ENCODE measurements at regions of chr7 and their contacts with region 1.

Region 1: GRCh38 chr7:149662591-149663095 is 110.7 kb downstream of the ZNF467 start:
- DNase-seq: peak; percentile 66
- H3K4me3 ChIP-seq: no peak overlapping the region
- H3K27ac ChIP-seq: no peak overlapping the region
- H3K4me1 ChIP-seq: no peaks in the 10 kb centered on the region
- H3K27me3 ChIP-seq: peaks cover 0 to 16% of the 10 kb centered on the region in 2 experiments
- CTCF ChIP-seq: peak; percentile 55 to 66
- POLR2A ChIP-seq: no peak

Region 2: DNA sequence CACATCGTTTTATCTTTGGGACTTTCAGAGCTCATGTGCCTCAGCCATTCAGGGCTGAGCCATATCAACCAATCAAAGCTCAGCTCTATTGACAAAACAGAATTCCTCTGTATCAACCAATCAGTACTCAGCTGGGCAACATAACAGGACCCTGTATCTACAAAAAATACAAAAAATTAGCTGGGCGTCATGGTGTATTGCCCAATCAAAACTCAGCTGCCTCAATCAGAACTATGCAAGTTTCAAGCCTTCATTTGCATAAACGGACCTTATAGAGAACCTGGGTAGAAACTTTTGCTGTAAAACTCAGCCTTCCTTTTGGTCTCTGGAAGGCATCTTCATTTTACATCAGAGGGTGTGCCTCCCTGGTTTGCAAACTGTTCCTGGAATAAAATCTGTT is 33.6 kb after region 1 on chr7:
- CTCF ChIA-PET with region 1: interaction called, 10 read pairs
- POLR2A ChIA-PET with region 1: no interaction called
- dilution Hi-C with region 1: no loop called
- intact Hi-C with region 1: no loop called
- DNase-seq: no peak
- H3K4me3 ChIP-seq: no peak overlapping the region
- H3K27ac ChIP-seq: no peak overlapping the region
- H3K4me1 ChIP-seq: no peaks in the 10 kb centered on the region
- H3K27me3 ChIP-seq: peaks cover 5 to 23% of the 10 kb centered on the region in 2 experiments
- CTCF ChIP-seq: no peak
- POLR2A ChIP-seq: no peak

Region 3: DNA sequence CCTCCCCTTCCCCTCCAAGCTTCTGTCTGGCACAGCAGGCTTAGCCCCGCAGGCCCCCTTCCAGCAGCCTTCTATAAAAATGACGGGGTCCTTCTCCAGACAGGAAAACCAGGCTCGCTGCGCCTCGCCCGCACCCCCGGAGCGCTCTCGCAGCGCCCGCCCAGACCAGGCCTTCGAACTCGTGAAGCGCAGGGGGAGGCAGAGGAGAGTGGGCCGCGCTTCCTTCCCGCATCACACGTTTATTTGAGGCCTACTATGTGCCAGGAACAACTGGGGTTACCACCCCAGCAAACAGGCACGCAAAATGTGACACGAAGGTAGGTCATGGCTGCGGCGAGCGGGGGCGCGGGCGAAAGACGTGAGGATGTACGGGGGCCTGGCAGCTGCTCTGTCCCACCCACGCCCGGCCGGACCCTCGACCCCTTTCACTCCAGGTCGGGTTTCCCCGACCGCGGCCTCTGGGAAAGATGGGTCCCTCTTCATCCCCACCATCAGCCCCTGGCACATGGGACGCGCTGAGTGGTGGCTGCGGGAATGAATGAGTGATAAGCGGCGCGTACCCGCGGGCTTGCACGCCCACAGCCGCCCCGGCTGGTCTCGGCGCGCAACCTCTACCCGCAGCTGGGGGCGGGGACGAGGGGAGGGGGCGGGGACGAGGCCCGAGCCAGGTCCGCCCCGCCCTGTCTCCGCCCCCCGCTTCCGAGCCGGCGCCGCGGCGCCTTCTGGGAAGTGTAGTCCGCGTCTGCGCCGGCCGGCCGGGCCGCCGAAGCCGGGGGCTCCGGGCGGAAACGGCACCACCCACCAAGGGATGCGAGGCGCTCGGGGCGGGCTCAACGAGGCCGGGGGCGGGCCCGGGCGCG is 51.6 kb after region 1 on chr7:
- CTCF ChIA-PET with region 1: interaction called, 27 read pairs
- POLR2A ChIA-PET with region 1: no interaction called
- dilution Hi-C with region 1: no loop called
- intact Hi-C with region 1: loop called (anchors 2 kb)
- DNase-seq: peak; percentile 78
- H3K4me3 ChIP-seq: peak overlapping the region; percentile 38 to 86 (median 51)
- H3K27ac ChIP-seq: no peak overlapping the region
- H3K4me1 ChIP-seq: peaks cover 11% of the 10 kb centered on the region
- H3K27me3 ChIP-seq: peaks cover 0 to 4% of the 10 kb centered on the region in 2 experiments
- CTCF ChIP-seq: no peak
- POLR2A ChIP-seq: no peak

Region 4: GRCh38 chr7:149748076-149748874 is 85.6 kb after region 1 on chr7:
- CTCF ChIA-PET with region 1: interaction called, 34 read pairs
- POLR2A ChIA-PET with region 1: no interaction called
- dilution Hi-C with region 1: no loop called
- intact Hi-C with region 1: no loop called
- DNase-seq: no peak
- H3K4me3 ChIP-seq: no peak overlapping the region
- H3K27ac ChIP-seq: no peak overlapping the region
- H3K4me1 ChIP-seq: no peaks in the 10 kb centered on the region
- H3K27me3 ChIP-seq: peaks cover 0 to 7% of the 10 kb centered on the region in 2 experiments
- CTCF ChIP-seq: no peak
- POLR2A ChIP-seq: no peak

Region 5: DNA sequence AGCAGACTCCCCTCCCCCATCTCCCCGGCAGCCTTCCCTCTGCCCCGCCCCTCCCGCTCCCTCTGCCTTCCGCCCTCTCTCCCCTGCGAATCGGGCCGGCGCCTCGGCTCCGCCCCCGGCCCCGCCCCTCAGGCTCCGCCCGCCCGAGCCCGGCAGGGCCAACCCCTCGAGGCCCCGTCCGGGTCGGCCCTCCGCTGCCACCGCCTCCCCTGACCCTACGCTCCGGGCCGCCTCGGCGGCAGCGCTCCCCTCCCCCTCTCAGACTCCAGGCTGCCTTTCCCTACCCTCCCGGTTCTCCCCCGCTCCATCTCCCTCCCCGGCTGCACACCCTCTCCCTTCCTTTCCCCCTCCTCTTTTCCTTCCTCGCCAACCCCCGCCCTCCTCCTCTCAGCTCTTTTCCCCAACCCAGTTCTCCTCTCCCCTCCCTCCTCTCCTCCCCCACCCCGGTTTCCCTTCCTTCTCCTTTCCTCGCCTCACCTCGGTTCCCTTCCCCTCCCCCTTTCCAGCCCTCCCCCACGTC is 109.1 kb after region 1 on chr7:
- CTCF ChIA-PET with region 1: interaction called, 12 read pairs
- POLR2A ChIA-PET with region 1: interaction called, 4 read pairs
- dilution Hi-C with region 1: no loop called
- intact Hi-C with region 1: no loop called
- DNase-seq: peak; percentile 95
- H3K4me3 ChIP-seq: peak overlapping the region; percentile 11 to 68 (median 44)
- H3K27ac ChIP-seq: no peak overlapping the region
- H3K4me1 ChIP-seq: peaks cover 19% of the 10 kb centered on the region
- H3K27me3 ChIP-seq: no peaks in the 10 kb centered on the region
- CTCF ChIP-seq: no peak
- POLR2A ChIP-seq: peak; percentile 51

Region 6: GRCh38 chr7:149799397-149800171 is 136.9 kb after region 1 on chr7:
- CTCF ChIA-PET with region 1: interaction called, 47 read pairs
- POLR2A ChIA-PET with region 1: no interaction called
- dilution Hi-C with region 1: no loop called
- intact Hi-C with region 1: loop called (anchors 1 kb)
- DNase-seq: no peak
- H3K4me3 ChIP-seq: no peak overlapping the region
- H3K27ac ChIP-seq: no peak overlapping the region
- H3K4me1 ChIP-seq: no peaks in the 10 kb centered on the region
- H3K27me3 ChIP-seq: no peaks in the 10 kb centered on the region
- CTCF ChIP-seq: peak; percentile 29 to 36
- POLR2A ChIP-seq: no peak

Measured in endothelial cell of umbilical vein (primary cell).